ENCODE measurements at regions of chr10 and their contacts with region 1.

Region 1: DNA sequence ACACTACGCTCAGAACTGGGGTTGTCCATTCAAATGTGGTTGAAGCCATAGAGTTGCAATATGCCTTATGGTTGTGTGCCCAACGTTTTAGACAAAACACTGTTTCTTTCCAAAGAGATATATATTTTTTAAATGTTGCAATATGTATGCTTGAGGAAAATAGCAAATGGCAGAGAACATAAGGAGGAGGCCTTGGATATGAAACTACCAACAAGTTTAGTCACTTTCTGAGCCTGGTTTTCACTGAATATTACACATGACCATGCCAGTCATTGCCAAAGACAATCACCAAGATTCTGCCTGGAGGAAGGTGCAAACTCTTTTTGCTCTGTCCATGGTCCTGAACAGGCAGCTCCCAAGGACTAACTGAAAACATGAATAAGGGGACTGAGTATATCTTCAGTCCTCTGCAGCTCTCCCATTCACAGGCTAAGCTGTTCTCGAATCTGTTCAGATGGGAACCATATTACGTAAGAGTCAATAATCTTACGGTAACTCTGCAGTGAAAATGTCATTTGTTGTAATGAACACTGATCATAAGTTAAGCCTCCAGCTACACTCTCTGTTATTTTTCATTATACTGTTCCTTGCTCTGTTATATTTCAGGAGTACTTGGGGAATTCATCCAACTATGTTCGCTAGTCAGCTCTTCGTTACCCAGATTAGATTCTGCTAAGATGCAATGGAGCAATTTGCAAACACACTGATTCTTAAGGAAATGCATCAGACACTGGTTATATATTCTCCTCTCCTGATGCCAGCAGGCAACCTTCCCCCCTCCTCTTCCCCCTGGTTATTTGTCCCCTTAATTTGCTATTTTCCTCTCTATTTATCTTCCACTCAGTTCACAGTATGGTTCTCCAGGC is 90.7 kb upstream of the C1QL3 start:
- DNase-seq: peak; percentile 33
- ATAC-seq: peak; percentile 36
- H3K4me3 Mint-ChIP-seq: no peak overlapping the region
- H3K27ac Mint-ChIP-seq: no peak overlapping the region
- H3K4me1 Mint-ChIP-seq: no peaks in the 10 kb centered on the region
- H3K27me3 Mint-ChIP-seq: no peaks in the 10 kb centered on the region

Region 2: DNA sequence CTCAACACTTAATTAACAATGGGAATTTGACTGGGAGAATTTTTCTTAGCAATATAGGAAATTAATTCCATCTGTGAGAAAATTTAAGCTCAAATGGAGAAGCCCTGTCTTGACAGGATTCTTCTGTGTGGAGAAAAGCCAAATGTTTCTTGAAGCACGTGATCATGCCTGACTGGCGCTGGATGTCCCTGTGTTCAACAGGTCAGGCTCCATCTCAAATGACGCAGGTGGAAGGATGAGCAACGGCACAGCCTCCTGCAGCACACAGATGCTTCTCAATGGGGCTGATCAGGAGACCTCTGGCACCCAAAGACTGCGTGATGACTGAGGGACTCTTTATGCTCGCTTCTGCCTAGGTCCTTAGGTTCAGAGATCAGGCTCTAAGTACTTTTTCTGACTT is 61.1 kb after region 1 on chr10:
- CTCF ChIA-PET with region 1: no interaction called
- POLR2A ChIA-PET with region 1: no interaction called
- intact Hi-C with region 1: loop called in 1 of 2 experiments (anchors 5 kb)
- DNase-seq: no peak
- ATAC-seq: no peak
- H3K4me3 Mint-ChIP-seq: no peak overlapping the region
- H3K27ac Mint-ChIP-seq: no peak overlapping the region
- H3K4me1 Mint-ChIP-seq: peaks cover 4% of the 10 kb centered on the region
- H3K27me3 Mint-ChIP-seq: no peaks in the 10 kb centered on the region

Region 3: GRCh38 chr10:16853201-16853600 is 240.9 kb after region 1 on chr10:
- CTCF ChIA-PET with region 1: no interaction called
- POLR2A ChIA-PET with region 1: no interaction called
- intact Hi-C with region 1: no loop called
- DNase-seq: no peak
- ATAC-seq: no peak
- H3K4me3 Mint-ChIP-seq: no peak overlapping the region
- H3K27ac Mint-ChIP-seq: no peak overlapping the region
- H3K4me1 Mint-ChIP-seq: no peaks in the 10 kb centered on the region
- H3K27me3 Mint-ChIP-seq: no peaks in the 10 kb centered on the region

Measured in activated CD4-positive, alpha-beta T cell treated with anti-CD3 and anti-CD28 coated beads for 36 hours (primary cell).